ENCODE measurements at regions of chr20 and their contacts with region 1.

Region 1: DNA sequence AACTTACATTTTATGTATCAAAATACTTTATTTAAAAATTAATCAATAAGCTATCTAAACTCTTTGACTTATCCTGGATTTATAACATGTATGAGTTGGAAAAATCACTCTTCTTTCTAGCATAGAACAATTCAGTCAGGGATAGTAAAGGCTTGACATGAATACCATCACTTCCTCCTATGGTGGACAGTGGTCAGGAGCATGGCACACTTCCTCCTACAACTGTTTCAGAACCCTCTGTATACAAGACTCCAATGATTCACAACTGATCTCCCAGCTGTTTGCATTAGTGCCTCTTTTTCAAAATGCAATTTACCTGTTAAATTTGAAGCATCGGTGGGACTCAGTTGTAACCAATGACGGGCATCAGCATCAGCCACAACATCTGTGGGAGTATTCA is 129.7 kb downstream of the RALGAPA2 start:
- DNase-seq: no peak
- ATAC-seq: no peak
- H3K4me3 ChIP-seq: no peak overlapping the region
- H3K4me3 Mint-ChIP-seq: no peak overlapping the region
- H3K27ac ChIP-seq: no peak overlapping the region
- H3K27ac Mint-ChIP-seq: no peak overlapping the region
- H3K4me1 ChIP-seq: no peaks in the 10 kb centered on the region
- H3K4me1 Mint-ChIP-seq: peaks cover 0 to 15% (median 5%) of the 10 kb centered on the region in 7 donors
- H3K27me3 ChIP-seq: no peaks in the 10 kb centered on the region
- H3K27me3 Mint-ChIP-seq: no peaks in the 10 kb centered on the region

Region 2: GRCh38 chr20:20535051-20535450 is 47.7 kb before region 1 on chr20:
- CTCF ChIA-PET with region 1: no interaction called
- POLR2A ChIA-PET with region 1: no interaction called
- intact Hi-C with region 1: loop called in 1 of 2 experiments (anchors 1 kb)
- DNase-seq: no peak
- ATAC-seq: no peak
- H3K4me3 ChIP-seq: no peak overlapping the region
- H3K4me3 Mint-ChIP-seq: no peak overlapping the region
- H3K27ac ChIP-seq: no peak overlapping the region
- H3K27ac Mint-ChIP-seq: no peak overlapping the region
- H3K4me1 ChIP-seq: no peaks in the 10 kb centered on the region
- H3K4me1 Mint-ChIP-seq: peaks cover 0 to 1% (median 0%) of the 10 kb centered on the region in 7 donors
- H3K27me3 ChIP-seq: no peaks in the 10 kb centered on the region
- H3K27me3 Mint-ChIP-seq: no peaks in the 10 kb centered on the region